ENCODE measurements at regions of chr5 and their contacts with region 1.

Region 1: DNA sequence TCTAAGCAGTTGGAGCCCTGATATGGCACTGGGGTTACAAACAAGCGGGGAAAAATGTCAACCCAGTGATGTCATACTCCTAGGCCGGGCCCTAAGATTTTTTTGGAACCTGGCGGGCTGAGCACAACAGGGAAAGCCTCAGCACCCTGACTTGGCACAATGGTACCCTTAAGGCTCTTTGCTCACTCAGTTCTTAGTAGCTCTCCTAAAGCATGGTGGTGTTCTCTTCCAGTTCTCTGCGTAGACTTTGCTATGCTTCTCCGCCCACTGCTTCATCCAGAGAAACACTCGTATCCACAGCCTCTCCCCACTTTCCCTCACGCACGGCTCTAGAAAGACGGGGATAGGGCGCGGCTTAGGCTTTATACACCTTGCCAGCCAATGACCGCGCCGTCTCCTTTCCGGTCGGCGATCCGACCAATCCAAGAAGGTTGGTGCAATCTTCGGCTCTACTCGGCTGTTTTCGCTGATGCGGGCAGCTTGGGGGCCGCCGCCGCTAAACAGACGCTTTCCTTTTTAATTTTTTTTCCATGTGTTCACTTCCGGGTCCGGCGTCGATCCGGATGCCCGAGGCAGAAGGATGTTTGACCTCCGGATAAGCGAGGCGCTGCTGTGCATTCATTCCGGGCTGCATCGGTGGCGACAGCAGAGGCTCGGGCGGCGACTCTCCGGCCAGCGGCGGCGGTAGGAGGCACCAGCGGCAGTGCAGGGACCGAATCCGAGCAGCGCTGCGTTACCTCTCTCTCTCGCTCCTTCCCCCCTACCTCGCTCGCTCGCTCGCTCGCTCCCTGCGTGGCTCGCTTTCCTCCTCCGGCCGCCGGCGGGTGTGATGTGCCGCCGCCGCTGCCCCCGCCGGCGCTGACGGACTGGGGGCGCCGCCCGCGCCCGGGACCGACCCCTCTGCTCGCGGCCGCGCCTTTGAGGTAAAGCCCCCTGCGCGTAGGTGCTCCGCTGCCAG is at the start of gene CSNK1G3:
- DNase-seq: peak; percentile 95 to 97 (median 96)
- H3K4me3 ChIP-seq: peak within 1 kb of the TSS; percentile 88
- H3K27ac ChIP-seq: peak within 1 kb of the TSS; percentile 80 to 89
- H3K4me1 ChIP-seq: no peaks in the 10 kb centered on the region
- H3K27me3 ChIP-seq: no peaks in the 10 kb centered on the region
- CTCF ChIP-seq: no peak
- EP300 ChIP-seq: no peak
- POLR2A ChIP-seq: peak; percentile 86
- total RNA-seq, gene CSNK1G3: 36.8 to 68.5 (median 54.1) TPM

Region 2: DNA sequence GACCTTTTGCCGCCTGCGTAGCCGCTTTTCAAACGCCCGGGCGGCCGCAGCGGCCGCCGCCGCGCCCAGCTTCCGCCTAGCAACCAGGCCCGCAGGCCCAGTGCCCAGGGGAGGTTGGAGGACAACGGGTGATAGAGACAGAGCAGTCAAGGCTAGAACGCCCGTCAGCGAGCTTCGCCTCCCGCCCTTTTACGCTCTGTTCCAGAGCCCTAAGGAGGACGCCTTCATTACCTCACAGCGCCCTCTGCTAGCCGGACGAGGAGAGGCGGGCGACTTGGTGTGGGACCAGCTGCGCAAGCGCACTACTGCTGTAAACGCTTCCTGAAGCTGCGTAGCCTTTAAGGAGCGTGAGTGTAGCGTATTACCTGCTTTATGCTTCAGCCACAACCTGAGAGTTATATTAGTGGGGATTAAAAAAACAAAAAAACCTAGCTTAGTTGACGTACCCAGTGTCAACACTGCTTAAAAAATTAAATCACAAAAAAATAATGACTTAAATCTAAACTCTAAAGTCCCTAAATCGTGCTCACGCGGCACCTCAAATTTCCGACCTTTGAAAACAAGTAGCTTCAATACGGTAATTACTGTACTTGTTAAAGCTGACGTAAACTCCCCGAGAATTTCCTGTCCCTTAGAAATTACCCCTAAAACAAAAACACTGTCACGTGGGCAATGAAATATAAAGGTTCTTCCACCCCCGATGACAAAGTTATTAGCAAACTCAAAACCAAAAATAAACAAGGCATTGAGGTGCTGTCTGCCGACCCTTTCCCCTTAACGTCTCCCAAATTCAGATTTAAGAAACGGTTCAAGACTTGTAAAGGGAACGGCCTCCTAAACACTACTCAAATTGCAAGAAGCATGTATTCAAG is 88.4 kb before region 1 on chr5 and contains the start of gene CEP120:
- intact Hi-C with region 1: loop called in 2 of 4 experiments (anchors 1 to 5 kb)
- DNase-seq: peak; percentile 97 to 99 (median 98)
- H3K4me3 ChIP-seq: peak within 1 kb of the TSS; percentile 74
- H3K27ac ChIP-seq: peak within 1 kb of the TSS; percentile 72 to 79
- H3K4me1 ChIP-seq: peaks cover 3% of the 10 kb centered on the region
- H3K27me3 ChIP-seq: no peaks in the 10 kb centered on the region
- CTCF ChIP-seq: peak; percentile 72 to 84 (median 83)
- EP300 ChIP-seq: no peak
- POLR2A ChIP-seq: peak; percentile 78
- total RNA-seq, gene CEP120: 20.9 to 33.0 (median 30.7) TPM

Region 3: GRCh38 chr5:123474228-123474627 is 37.7 kb before region 1 on chr5:
- intact Hi-C with region 1: no loop called
- DNase-seq: no peak
- H3K4me3 ChIP-seq: no peak overlapping the region
- H3K27ac ChIP-seq: no peak overlapping the region
- H3K4me1 ChIP-seq: no peaks in the 10 kb centered on the region
- H3K27me3 ChIP-seq: no peaks in the 10 kb centered on the region
- CTCF ChIP-seq: no peak
- EP300 ChIP-seq: no peak
- POLR2A ChIP-seq: no peak

Region 4: DNA sequence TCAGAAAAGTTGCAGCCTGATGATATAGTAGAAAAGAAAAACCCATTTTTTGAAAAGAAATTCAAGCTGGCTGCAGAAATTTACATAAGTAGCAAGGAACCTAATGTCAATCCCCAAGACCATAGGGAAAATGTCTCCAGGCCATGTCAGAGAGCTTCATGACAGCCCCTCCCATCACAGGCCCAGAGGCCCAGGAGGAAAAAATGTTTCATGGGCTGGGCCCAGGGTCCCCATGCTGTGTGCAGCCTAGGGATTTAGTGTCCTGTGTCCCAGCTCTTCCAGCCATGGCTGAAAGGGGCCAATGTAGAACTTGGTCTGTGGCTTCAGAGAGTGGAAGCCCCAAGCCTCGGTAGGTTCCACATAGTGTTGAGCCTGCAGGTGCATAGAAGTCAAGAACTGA is 220.3 kb after region 1 on chr5:
- intact Hi-C with region 1: no loop called
- DNase-seq: no peak
- H3K4me3 ChIP-seq: no peak overlapping the region
- H3K27ac ChIP-seq: no peak overlapping the region
- H3K4me1 ChIP-seq: no peaks in the 10 kb centered on the region
- H3K27me3 ChIP-seq: no peaks in the 10 kb centered on the region
- CTCF ChIP-seq: no peak
- EP300 ChIP-seq: no peak
- POLR2A ChIP-seq: no peak